ENCODE measurements at regions of chr4 and their contacts with region 1.

Region 1: GRCh38 chr4:86927843-86928395 is 6.9 kb upstream of the AFF1 start:
- DNase-seq: no peak
- H3K4me3 ChIP-seq: no peak overlapping the region
- H3K4me1 ChIP-seq: no peaks in the 10 kb centered on the region
- H3K27me3 ChIP-seq: no peaks in the 10 kb centered on the region

Region 2: DNA sequence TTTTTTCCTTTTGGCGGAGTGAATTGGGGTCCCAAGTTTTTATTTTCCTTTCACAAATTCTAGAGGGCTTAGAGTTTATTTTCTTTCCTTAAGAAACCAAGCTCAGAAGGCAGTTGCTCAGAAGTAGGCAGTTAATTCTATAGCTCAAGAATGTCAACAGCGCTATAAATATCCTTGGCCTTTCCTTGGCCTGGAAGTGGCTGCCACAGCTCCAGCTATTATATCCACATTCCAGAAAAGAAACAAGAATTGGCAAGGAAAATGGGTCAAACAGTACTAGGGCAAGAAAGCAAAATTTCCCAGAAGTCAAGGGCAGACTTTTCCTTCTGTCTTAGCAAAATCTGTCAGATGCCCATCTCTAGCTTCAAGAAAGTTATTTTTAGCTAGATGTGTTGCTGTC is 109.7 kb before region 1 on chr4:
- in situ Hi-C with region 1: no loop called
- DNase-seq: no peak
- H3K4me3 ChIP-seq: no peak overlapping the region
- H3K4me1 ChIP-seq: no peaks in the 10 kb centered on the region
- H3K27me3 ChIP-seq: no peaks in the 10 kb centered on the region

Region 3: GRCh38 chr4:87093443-87094123 is 165.7 kb after region 1 on chr4:
- in situ Hi-C with region 1: loop called (anchors 5 kb)
- DNase-seq: peak; percentile 62 to 63
- H3K4me3 ChIP-seq: no peak overlapping the region
- H3K4me1 ChIP-seq: no peaks in the 10 kb centered on the region
- H3K27me3 ChIP-seq: no peaks in the 10 kb centered on the region

Region 4: DNA sequence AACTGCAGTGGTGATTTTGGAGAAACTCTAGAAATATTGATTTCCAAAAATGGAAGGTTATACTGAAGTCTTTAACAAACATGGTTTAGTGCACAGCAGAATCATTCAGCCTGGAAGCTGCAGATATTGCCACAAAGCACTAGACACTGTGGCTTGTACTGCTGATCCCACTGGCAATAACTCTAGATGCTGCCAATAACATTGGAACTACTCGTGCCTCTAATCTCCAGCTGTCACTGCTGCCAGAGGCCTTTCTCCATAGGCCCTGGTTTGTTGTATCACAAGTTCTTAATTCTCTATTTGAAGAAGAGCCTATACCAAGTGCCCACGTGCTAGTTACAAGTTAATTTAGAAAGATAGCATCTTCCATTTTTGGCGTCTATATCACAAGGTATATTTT is 741.5 kb after region 1 on chr4:
- in situ Hi-C with region 1: no loop called
- DNase-seq: no peak
- H3K4me3 ChIP-seq: no peak overlapping the region
- H3K4me1 ChIP-seq: no peaks in the 10 kb centered on the region
- H3K27me3 ChIP-seq: no peaks in the 10 kb centered on the region

Measured in HAP-1 (cell line).